Posterior vena cava (tissue), 2 donors: ENCODE measurements at regions of chr7 and their contacts with region 1.

Region 1: GRCh38 chr7:28955718-28956619 is 2.2 kb downstream of the TRIL start:
- DNase-seq: peak; percentile 92

Region 2: DNA sequence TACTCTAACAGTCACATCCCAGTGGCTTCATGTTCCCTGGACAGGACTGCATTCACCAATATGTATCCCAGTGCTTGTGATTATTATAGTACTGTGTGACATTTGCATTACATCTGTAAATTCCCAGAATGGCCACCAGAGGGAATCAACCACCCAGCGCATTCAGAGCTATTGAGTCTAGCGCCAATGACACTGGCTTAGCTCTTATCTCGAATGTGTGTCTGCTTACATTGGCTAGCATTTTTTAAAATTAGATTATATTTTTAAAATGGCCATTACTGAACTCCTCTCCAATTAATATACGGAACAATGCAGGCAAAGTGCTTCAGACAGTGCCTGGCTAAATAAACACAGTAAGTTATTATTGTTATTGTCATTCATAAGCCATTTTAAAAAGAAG is 34.1 kb before region 1 on chr7:
- intact Hi-C with region 1: loop called in 1 of 2 experiments (anchors 5 kb)
- DNase-seq: no peak

Region 3: GRCh38 chr7:28984631-28985030 is 28.7 kb after region 1 on chr7:
- intact Hi-C with region 1: no loop called
- DNase-seq: peak; percentile 85

Region 4: GRCh38 chr7:29057046-29057445 is 101.1 kb after region 1 on chr7:
- intact Hi-C with region 1: no loop called
- DNase-seq: no peak

Region 5: DNA sequence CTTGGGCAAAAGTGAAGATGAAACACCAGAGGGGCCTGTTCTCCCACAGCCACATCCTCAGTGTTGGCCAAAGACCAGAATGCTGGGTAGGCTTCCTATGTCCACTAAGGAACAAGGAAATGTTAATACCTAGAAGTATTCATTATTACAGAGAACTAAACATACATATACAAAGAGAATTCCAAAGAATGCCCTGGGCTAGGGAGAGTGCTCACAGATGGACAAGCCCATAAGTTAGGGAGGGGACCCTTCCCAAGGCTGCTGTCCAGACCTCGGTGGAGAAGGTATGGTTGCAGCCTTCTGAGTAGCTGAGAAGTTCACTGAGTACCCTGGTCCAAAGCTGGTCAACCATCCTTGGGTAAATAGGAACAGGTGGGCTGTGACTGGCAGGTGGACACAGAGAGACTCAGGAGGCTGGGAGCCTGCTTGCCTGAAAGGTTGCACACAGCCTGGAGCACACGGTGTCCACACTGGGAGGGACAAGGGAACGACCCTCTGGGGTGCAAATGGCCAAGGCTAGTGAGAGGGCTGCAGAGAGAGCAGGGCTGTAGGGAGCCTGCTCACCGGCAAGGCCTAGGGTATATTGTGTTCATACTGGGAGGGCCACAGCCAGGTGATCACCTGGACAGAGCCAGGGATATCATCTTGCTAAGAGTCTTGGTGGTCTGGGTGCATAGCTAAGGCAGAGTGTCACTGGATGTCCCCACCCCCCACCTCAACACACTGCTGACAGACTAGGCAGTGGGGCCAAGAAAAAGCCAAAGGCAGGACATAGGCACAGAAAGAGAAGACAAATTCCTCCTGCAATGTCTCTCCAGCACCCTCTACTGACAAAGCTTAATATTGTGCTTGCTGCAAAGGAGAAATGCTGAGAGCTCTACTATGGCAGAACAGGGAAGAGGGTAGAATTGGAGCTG is 150.0 kb after region 1 on chr7:
- intact Hi-C with region 1: loop called in 1 of 2 experiments (anchors 10 kb)
- DNase-seq: no peak